Left ventricle myocardium superior (tissue), 1 donor: ENCODE measurements at regions of chr12 and their contacts with region 1.

Region 1: DNA sequence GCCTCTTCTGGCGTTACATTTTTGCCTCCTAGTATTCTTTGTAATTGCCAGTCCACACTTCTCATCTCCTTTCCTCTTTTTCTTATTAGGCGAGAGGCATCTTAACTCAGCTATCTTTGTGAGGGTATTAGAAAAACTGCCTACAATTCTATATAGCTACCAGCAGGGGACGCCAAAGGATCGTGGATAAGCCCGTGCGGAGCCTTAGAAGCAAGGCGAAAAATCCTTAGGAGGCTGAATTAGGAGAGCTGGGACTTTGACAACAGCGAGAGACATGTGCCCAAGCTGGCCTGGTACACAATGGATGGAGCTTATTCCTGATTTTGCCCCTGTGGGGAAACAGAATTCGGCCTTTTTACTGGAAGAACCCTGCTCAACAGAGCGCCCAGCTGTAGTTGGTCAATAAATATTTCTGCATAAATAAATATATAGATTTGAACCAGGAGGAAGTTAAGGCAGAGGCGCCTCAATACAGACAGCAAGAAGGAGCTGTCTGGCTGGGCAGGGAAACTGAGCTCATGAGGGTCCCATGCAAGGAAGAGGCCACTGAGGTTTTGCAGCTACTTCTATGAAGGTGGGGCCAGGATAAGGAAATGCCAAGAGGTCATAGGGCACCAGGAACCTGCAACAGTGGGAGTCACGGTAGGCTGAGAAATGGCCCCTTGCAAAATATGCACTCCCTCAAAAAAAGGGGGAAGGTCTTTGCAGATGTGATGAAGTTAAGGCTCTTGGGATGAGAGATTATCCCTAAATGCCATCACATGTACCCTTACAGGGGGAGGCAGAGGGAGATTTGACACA is 14.6 kb upstream of the RBM19 start:
- DNase-seq: no peak
- ATAC-seq: peak; percentile 66

Region 2: DNA sequence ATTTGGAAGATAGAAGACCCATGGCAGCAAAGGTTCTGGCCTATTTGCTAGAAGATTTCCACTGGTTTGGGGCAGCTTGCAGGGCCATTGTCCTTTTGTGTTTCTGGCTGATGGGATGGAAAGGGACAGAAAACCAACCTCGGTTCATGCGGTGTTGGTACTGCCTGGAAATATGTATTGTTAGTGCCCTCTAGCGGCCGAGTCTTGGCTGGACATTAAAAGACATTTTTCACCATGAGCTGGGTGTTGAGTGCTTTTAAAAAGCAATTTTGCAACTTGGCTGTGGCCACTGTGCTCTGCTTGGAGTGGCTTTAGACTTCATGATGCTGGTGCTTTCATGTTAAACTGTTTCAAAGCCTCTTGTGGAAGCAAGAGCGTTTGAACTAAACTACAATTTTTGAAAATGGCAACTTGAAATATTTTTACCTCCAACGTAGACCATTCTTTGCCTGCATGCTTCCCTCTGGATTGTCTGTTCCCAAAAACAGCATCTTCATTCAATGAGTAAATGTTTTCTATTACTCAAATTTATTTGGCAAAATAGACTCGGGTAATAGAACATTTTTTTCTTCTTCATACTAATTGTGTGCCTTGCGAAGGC is 527.9 kb after region 1 on chr12:
- intact Hi-C with region 1: loop called (anchors 5 kb)
- DNase-seq: peak; percentile 62
- ATAC-seq: peak; percentile 76